ENCODE measurements at regions of chr13 and their contacts with region 1.

Region 1: DNA sequence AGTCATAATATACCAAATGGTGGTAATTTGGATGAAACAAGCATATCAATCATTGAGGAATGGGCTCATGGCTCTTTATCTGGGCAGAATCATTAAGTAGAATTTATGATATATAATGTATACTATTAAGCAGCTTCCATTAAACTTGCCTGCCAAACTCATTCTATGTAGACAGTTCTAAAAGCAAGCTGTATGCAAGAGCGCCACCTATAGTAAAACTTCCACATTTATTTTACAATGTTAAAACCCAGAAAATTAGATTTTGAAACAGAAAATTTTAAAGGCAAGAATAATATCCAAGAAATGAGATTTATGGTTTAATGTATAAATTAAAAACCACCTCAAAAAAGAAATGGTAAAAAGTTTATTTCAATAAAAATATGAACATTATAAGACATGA is 161.5 kb downstream of the MZT1 start:
- DNase-seq: no peak
- H3K4me3 ChIP-seq: no peak overlapping the region
- H3K27ac ChIP-seq: no peak overlapping the region
- H3K4me1 ChIP-seq: no peaks in the 10 kb centered on the region
- H3K27me3 ChIP-seq: no peaks in the 10 kb centered on the region
- CTCF ChIP-seq: peak; percentile 80

Region 2: GRCh38 chr13:71303144-71303543 is 1262.7 kb before region 1 on chr13:
- CTCF ChIA-PET with region 1: no interaction called
- POLR2A ChIA-PET with region 1: no interaction called
- intact Hi-C with region 1: loop called (anchors 10 kb)
- DNase-seq: no peak
- H3K4me3 ChIP-seq: no peak overlapping the region
- H3K27ac ChIP-seq: no peak overlapping the region
- H3K4me1 ChIP-seq: no peaks in the 10 kb centered on the region
- H3K27me3 ChIP-seq: no peaks in the 10 kb centered on the region
- CTCF ChIP-seq: 0 out of 2 replicates have a peak, but pooled peaks have one; percentile 24

Region 3: GRCh38 chr13:71979616-71980015 is 586.3 kb before region 1 on chr13:
- CTCF ChIA-PET with region 1: no interaction called
- POLR2A ChIA-PET with region 1: no interaction called
- intact Hi-C with region 1: loop called (anchors 10 kb)
- DNase-seq: no peak
- H3K4me3 ChIP-seq: no peak overlapping the region
- H3K27ac ChIP-seq: no peak overlapping the region
- H3K4me1 ChIP-seq: no peaks in the 10 kb centered on the region
- H3K27me3 ChIP-seq: no peaks in the 10 kb centered on the region
- CTCF ChIP-seq: peak; percentile 33; the same call in 1 of the 2 replicates

Region 4: DNA sequence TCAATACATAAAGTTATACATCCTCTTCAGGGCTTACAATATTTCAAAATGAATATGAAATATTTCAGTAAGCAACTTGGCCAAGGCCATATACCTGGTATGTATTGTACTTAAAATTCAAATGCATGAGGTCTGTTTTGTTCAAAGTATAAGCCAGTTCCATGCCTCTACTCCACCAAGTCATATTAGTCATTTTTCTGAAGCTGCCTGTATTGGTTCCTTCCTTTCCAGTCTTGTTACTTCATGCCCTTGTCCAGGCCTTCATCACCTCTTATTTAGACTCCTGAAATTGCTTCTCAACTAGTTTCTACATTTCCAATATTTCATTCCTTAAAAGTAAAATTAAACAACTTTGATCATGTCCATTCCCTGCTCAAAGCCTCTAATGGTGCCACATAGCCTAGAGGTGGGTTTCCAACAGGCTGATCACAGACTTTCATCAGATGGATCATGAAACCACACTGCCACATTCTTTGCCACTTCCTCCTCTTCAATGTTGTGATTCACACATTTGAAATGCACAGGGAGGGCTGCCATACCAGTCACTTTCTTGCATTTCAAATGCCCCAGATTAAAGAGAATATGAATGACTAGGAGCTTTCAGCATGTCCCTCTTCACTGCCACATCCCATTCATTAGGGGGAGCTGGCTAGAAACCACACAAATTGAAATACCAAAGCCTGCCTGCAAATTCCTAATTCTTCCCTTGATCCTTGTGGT is 274.8 kb before region 1 on chr13:
- CTCF ChIA-PET with region 1: no interaction called
- POLR2A ChIA-PET with region 1: no interaction called
- intact Hi-C with region 1: no loop called
- DNase-seq: peak; percentile 63 to 71
- H3K4me3 ChIP-seq: no peak overlapping the region
- H3K27ac ChIP-seq: peak overlapping the region; percentile 55
- H3K4me1 ChIP-seq: peaks cover 12% of the 10 kb centered on the region; the same call in 1 of the 2 replicates
- H3K27me3 ChIP-seq: no peaks in the 10 kb centered on the region
- CTCF ChIP-seq: no peak